Esophagus squamous epithelium (tissue), 5 donors: ENCODE measurements at regions of chr15 and their contacts with region 1.

Region 1: GRCh38 chr15:53000410-53000809 is 210.3 kb upstream of the ONECUT1 start:
- DNase-seq: no peak
- H3K4me3 ChIP-seq: no peak overlapping the region
- H3K27ac ChIP-seq: no peak overlapping the region
- H3K4me1 ChIP-seq: no peaks in the 10 kb centered on the region
- H3K27me3 ChIP-seq: no peaks in the 10 kb centered on the region
- CTCF ChIP-seq: no peak
- POLR2A ChIP-seq: no peak

Region 2: DNA sequence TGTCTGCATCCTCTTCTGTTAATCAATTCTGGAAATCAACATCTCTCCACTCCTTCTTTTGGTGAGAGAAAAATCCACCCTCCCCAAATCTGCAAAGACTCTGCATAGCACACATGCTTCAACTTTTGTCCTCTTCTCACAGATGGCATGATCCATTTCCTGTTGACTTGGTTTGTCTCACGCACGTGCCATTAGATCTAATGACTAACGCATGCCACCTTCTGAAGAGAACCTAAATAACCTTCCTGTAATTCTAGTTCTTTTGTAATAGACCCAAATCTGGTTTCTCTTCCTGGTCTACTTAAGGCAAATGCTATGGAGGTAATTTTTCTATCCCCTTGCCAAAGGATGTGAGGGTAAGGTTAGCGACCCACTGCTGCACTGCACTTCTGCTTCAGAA is 270.2 kb before region 1 on chr15:
- intact Hi-C with region 1: no loop called
- DNase-seq: no peak
- H3K4me3 ChIP-seq: no peak overlapping the region
- H3K27ac ChIP-seq: peak overlapping the region; percentile 13 to 66 (median 39)
- H3K4me1 ChIP-seq: peaks cover 0 to 19% (median 17%) of the 10 kb centered on the region in 3 donors
- H3K27me3 ChIP-seq: no peaks in the 10 kb centered on the region
- CTCF ChIP-seq: no peak
- POLR2A ChIP-seq: no peak

Region 3: GRCh38 chr15:52797625-52798501 is 202.5 kb before region 1 on chr15:
- intact Hi-C with region 1: no loop called
- DNase-seq: no peak
- H3K4me3 ChIP-seq: peak overlapping the region in 1 of 4 donors; percentile 9
- H3K27ac ChIP-seq: no peak overlapping the region
- H3K4me1 ChIP-seq: peaks cover 0 to 20% (median 4%) of the 10 kb centered on the region in 3 donors
- H3K27me3 ChIP-seq: peaks cover 18 to 100% (median 56%) of the 10 kb centered on the region in 4 donors
- CTCF ChIP-seq: no peak
- POLR2A ChIP-seq: no peak

Region 4: DNA sequence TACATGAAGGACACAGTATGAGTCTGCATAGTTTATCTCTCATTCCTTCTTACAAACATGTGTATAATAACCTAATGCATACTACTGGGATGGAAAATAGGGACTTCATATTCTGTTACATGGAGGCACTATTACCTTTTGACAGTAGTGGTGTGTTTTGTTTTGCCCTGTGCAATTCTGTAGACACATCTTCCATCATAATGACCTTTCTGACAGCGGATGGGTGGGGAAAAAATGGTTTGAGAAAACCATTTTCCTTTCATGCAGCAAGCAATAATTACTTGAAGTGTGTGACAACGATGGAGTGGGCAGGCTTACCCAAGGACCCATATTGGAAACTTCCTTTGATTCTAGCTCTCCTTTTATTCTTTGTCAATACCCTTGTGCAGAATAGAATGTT is 56.7 kb before region 1 on chr15:
- intact Hi-C with region 1: loop called (anchors 10 kb)
- DNase-seq: no peak
- H3K4me3 ChIP-seq: no peak overlapping the region
- H3K27ac ChIP-seq: no peak overlapping the region
- H3K4me1 ChIP-seq: no peaks in the 10 kb centered on the region
- H3K27me3 ChIP-seq: no peaks in the 10 kb centered on the region
- CTCF ChIP-seq: no peak
- POLR2A ChIP-seq: no peak